ENCODE measurements at regions of chr6 and their contacts with region 1.

Region 1: GRCh38 chr6:110944681-110945151 is 13.8 kb upstream of the GTF3C6 start:
- DNase-seq: peak; percentile 44
- H3K4me3 Mint-ChIP-seq: peak overlapping the region; percentile 10
- H3K27ac Mint-ChIP-seq: peak overlapping the region; percentile 83
- H3K4me1 Mint-ChIP-seq: peaks cover 11% of the 10 kb centered on the region
- H3K27me3 Mint-ChIP-seq: no peaks in the 10 kb centered on the region

Region 2: DNA sequence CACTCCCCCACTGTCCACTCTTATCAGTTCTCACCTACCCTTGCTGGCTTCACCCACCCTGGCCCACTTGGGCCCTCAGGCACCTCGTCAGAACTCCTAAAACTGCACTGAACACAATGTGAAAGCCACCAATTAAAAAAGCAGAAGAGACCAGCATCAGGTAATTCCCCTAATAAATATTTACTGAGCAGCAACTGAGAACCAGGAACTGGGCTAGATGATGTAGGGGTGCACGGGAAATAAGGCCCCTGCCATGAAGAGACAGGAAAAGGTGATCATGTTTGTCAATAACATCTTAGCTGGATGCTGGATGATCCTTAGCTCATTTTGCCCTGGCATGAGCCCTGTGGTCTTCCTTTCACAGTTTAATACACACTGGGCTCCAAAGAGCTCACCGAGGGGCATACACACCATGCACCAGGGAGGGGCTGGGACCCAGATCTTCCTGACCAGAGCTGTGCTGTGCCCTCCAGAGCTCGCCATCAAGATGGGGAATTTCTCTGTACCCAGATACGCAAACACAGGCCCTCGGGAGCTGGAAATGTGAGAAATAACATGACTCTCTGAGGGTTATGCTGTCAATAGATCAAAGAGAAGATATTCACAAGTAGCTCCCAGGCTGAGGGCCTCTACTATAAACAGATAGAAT is 354.7 kb before region 1 on chr6:
- intact Hi-C with region 1: loop called (anchors 1 kb)
- DNase-seq: no peak
- H3K4me3 Mint-ChIP-seq: no peak overlapping the region
- H3K27ac Mint-ChIP-seq: peak overlapping the region; percentile 78
- H3K4me1 Mint-ChIP-seq: peaks cover 32% of the 10 kb centered on the region
- H3K27me3 Mint-ChIP-seq: peaks cover 4% of the 10 kb centered on the region

Region 3: GRCh38 chr6:110859335-110859792 is 85.4 kb before region 1 on chr6:
- intact Hi-C with region 1: no loop called
- DNase-seq: no peak
- H3K4me3 Mint-ChIP-seq: no peak overlapping the region
- H3K27ac Mint-ChIP-seq: no peak overlapping the region
- H3K4me1 Mint-ChIP-seq: peaks cover 4% of the 10 kb centered on the region
- H3K27me3 Mint-ChIP-seq: no peaks in the 10 kb centered on the region

Region 4: DNA sequence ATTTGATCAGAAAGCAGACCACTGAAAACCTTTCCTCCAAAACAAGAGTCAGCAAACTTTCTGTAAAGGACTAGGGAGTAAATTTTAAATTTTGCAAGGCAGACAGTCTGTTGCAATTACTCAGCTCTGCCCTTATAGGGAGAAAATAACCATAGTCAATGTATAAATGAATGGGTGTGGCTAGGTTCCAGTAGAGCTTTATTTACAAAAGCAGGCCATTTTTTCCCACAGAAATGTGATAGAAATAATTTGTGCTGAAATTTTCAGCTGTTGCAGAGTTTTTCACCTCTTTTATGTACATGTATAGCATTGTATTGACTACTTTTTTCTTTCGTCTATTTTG is 62.5 kb before region 1 on chr6:
- intact Hi-C with region 1: no loop called
- DNase-seq: no peak
- H3K4me3 Mint-ChIP-seq: peak overlapping the region; percentile 2
- H3K27ac Mint-ChIP-seq: peak overlapping the region; percentile 59
- H3K4me1 Mint-ChIP-seq: peaks cover 64% of the 10 kb centered on the region
- H3K27me3 Mint-ChIP-seq: no peaks in the 10 kb centered on the region

Region 5: DNA sequence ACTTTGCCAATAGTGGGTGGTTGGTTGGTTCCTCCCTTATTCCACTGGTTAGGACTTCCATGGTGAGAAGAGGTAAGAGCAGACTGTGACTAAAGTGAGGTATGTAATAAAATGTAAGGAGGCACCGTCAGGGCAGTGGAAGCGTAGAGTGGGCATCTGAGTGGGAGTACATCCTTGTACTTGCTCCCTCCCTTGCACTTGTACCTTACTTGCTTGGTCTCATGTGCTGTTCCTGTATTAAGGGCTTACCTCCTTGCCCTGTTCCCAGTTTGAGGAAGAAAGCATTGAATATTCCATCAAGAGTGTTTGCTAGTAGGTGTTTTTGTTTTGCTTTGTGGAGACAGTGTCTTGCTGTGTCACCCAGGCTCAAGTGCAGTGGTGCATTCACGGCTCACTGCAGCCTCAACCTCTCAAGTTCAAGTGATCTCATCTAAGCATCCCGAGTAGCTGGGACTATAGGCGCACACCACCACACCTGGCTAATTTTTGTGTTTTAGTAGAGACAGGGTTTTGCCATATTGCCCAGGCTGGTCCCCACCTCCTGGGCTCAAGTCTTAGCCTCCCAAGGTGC is 44.6 kb before region 1 on chr6:
- intact Hi-C with region 1: no loop called
- DNase-seq: no peak
- H3K4me3 Mint-ChIP-seq: no peak overlapping the region
- H3K27ac Mint-ChIP-seq: no peak overlapping the region
- H3K4me1 Mint-ChIP-seq: no peaks in the 10 kb centered on the region
- H3K27me3 Mint-ChIP-seq: no peaks in the 10 kb centered on the region

Region 6: GRCh38 chr6:110958329-110959192 is 13.8 kb after region 1 on chr6 and contains the start of gene GTF3C6:
- intact Hi-C with region 1: loop called (anchors 1 kb)
- DNase-seq: peak; percentile 93
- H3K4me3 Mint-ChIP-seq: peak within 1 kb of the TSS; percentile 99
- H3K27ac Mint-ChIP-seq: peak within 1 kb of the TSS; percentile 99
- H3K4me1 Mint-ChIP-seq: peaks cover 13% of the 10 kb centered on the region
- H3K27me3 Mint-ChIP-seq: no peaks in the 10 kb centered on the region
- total RNA-seq, gene GTF3C6: 141 and 146 TPM in 2 replicates